ENCODE measurements at regions of chr17 and their contacts with region 1.

Region 1: DNA sequence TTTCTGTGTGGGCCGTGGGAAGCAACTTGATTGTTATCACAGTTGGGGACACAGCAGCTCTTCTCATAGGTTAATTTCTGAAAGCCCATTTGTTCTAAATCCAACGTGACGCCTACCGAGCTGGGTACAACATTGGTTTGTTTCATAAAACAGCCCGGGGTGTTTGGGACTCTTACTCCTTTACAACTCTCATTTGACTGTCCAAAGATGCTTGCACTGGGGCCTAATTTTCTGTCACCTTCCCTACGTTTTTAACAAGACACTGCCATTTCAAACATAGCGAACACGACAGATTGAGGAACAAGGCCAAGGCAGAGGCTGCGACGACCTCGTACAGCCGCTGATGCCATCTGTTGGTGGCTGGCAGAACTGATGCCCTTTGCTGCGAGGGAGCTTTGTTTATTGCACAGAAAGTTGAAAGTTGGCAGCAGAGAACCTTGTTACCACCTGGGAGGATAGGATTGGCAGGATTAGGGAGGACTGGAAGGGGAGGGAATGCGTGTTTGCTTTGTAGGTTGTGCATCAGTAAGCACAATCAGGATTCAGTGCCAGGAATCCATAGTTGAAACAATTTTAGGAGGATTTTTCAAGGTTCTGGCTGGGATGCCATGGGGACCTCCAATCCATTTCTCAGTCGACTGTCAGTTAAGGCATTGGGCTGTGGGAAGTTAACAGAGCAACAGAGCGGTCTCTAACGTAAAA is 98.3 kb downstream of the PITPNC1 start:
- DNase-seq: peak; percentile 53 to 67
- H3K4me3 ChIP-seq: no peak overlapping the region
- H3K27ac ChIP-seq: no peak overlapping the region
- H3K4me1 ChIP-seq: no peaks in the 10 kb centered on the region
- H3K27me3 ChIP-seq: no peaks in the 10 kb centered on the region
- CTCF ChIP-seq: peak; percentile 92

Region 2: DNA sequence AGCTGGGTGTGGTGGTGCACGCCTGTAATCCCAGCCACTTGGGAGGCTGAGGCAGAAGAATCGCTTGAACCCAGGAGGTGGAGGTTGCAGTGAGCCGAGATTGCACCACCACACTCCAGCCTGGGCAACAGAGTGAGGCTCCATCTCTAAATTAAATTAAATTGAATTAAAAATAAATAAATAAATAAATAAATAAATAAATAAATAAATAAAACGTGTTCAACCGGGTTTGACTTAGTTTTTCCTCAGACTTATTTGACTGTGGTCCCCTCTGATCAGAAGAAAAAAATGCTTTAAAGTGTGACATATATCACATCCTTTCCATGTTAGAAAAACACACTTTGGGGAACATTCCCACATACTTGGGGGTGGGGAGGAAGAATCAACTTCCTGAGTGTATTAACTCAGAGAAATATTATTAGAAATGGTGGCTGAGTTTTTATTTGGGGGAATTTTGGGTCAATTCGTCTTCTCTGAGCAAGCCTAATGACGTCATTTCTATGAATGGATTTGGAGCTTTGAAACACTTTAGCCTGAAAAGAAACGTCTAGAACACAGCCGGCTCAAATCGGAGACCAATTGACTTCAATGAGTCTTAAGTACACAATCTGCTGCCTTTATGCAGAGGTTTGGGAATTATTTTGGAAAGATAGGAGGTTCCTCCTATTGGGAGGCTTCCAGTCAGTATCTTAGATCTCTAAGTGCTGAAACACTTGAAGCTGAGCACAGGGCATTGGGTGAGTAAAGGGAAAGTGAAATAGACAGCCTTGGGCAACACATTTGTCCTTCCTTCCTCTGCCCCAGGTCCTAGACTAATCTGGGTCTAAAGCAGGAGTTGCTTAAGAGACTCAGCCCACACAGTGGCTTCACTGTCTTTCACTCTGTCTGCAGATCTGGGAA is 34.3 kb after region 1 on chr17:
- CTCF ChIA-PET with region 1: no interaction called
- POLR2A ChIA-PET with region 1: no interaction called
- intact Hi-C with region 1: no loop called
- DNase-seq: no peak
- H3K4me3 ChIP-seq: no peak overlapping the region
- H3K27ac ChIP-seq: no peak overlapping the region
- H3K4me1 ChIP-seq: no peaks in the 10 kb centered on the region
- H3K27me3 ChIP-seq: no peaks in the 10 kb centered on the region
- CTCF ChIP-seq: no peak

Region 3: DNA sequence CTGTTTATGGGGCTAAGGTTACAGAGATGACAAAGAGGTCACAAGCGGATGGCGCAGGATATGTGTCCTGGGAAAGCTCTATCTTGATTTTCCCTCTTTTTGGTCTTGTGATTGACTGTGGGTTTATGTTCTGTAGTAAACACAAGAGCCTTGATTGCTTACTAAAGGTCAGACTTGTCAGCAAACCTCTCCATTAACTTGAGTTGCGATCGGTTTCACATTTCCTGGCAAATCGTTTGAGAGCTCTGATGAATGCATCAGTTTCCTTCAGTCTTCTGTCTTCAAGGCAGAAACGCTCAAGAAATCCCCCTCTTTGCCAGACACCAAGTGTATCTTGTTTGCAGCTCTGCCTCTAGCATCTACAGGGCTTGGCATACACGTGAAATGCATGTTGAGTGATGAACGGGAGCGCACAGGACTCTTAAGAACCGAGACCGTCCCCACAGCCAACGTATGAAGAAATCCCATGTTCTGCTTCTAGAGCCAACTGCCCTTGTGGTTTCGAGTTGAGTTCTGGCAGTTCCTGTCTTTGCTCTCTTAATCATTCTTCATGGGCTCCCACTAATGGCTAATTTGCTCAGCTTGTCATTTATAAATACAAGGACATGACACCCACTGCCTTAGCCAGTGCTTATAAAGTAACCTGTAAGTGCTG is 45.0 kb after region 1 on chr17:
- CTCF ChIA-PET with region 1: interaction called, 14 read pairs
- POLR2A ChIA-PET with region 1: no interaction called
- intact Hi-C with region 1: no loop called
- DNase-seq: no peak
- H3K4me3 ChIP-seq: no peak overlapping the region
- H3K27ac ChIP-seq: no peak overlapping the region
- H3K4me1 ChIP-seq: no peaks in the 10 kb centered on the region
- H3K27me3 ChIP-seq: no peaks in the 10 kb centered on the region
- CTCF ChIP-seq: no peak

Region 4: DNA sequence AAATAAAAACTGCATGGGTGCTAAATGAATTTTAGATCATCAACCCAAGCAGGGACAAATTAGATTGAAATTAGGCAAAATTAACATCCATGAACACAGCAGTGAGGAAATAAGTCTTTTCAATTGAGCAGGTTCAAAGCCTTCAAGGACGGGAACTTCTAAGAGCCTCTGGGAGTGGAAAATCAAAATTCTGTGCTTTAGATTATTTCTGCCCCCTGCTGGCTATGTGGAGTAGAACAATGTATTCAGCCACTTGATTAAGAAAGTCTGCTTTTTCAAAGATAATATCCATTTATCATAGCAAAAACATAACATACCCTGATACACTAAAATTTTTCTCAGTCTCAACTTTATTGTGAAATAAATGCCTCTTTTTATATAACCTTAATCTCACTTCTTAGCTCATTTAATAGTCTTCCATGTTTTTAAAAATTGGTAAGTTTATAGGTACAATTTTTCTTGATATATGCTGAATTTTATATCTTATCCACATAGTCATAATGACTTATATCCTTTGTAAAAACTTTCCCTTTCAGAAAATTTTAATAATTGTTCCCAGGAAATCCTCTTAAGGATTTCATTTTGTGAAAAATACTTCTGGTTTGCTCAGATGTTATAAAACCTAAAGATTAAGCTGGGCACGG is 214.3 kb after region 1 on chr17:
- CTCF ChIA-PET with region 1: no interaction called
- POLR2A ChIA-PET with region 1: no interaction called
- intact Hi-C with region 1: loop called (anchors 5 kb)
- DNase-seq: peak; percentile 24 to 51
- H3K4me3 ChIP-seq: no peak overlapping the region
- H3K27ac ChIP-seq: no peak overlapping the region
- H3K4me1 ChIP-seq: no peaks in the 10 kb centered on the region
- H3K27me3 ChIP-seq: no peaks in the 10 kb centered on the region
- CTCF ChIP-seq: peak; percentile 88